CD4-positive, alpha-beta memory T cell (primary cell): ENCODE measurements at regions of chr15 and their contacts with region 1.

Region 1: GRCh38 chr15:48810414-48811317 is at the start of gene CEP152:
- DNase-seq: peak; percentile 97 to 99 (median 98)
- H3K4me3 ChIP-seq: peak within 1 kb of the TSS; percentile 91 to 99
- H3K4me3 Mint-ChIP-seq: peak within 1 kb of the TSS; percentile 80 to 95 (median 94)
- H3K27ac ChIP-seq: peak within 1 kb of the TSS; percentile 67
- H3K27ac Mint-ChIP-seq: peak within 1 kb of the TSS; percentile 82 to 95 (median 88)
- H3K4me1 ChIP-seq: peaks cover 16% of the 10 kb centered on the region
- H3K4me1 Mint-ChIP-seq: peaks cover 19 to 38% (median 24%) of the 10 kb centered on the region in 4 donors
- H3K27me3 ChIP-seq: no peaks in the 10 kb centered on the region
- H3K27me3 Mint-ChIP-seq: peaks cover 0 to 5% of the 10 kb centered on the region in 2 donors
- total RNA-seq, gene CEP152: 14.4 to 15.3 TPM

Region 2: DNA sequence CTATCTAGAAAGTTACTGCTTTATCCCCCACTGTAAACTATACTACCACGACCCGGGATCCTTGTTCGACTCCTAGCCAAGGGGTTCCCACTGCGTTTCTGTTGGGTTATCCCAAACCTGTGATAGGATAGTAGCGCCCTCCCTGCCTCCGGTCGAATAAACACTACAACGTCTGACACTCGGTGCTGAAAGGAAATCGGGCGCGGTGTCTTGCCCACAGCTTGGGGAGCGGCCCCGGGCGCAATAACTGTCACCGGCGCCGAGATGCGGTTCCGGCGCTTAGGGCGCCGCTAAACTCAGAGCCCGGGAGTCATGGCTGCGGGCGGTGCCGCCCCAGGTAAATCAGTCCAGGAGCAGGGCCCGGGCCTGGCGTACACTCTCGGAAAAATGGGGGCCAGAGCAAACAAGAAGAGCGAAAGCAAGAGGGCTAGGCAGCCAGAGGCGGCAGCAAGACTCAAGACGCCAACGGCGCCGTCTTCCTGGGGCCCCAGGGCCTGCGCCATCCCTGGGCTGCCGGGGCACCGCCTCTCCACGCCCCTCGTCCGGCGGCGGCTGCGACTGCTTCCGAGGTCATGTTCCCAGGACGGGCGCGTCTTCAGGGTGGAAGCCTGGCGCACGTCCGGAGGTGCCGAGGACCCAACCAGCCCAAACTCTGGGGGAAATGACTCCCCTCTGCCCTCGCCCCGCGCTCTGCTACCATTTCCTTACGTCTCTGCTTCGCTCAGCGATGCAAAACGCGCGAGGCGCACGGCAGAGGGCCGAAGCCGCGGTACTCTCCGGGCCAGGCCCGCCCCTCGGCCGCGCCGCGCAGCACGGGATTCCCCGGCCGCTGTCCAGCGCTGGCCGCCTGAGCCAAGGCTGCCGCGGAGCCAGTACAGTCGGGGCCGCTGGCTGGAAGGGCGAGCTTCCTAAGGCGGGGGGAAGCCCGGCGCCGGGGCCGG is 479.5 kb before region 1 on chr15 and contains the start of gene DUT:
- CTCF ChIA-PET with region 1: no interaction called
- POLR2A ChIA-PET with region 1: no interaction called
- intact Hi-C with region 1: loop called (anchors 1 kb)
- DNase-seq: peak; percentile 83 to 87 (median 85)
- H3K4me3 ChIP-seq: peak within 1 kb of the TSS; percentile 55 to 84
- H3K4me3 Mint-ChIP-seq: peak within 1 kb of the TSS; percentile 96 to 100 (median 100)
- H3K27ac ChIP-seq: peak within 1 kb of the TSS; percentile 89
- H3K27ac Mint-ChIP-seq: peak within 1 kb of the TSS; percentile 98 to 100 (median 99)
- H3K4me1 ChIP-seq: peaks cover 21% of the 10 kb centered on the region
- H3K4me1 Mint-ChIP-seq: peaks cover 16 to 35% (median 27%) of the 10 kb centered on the region in 4 donors
- H3K27me3 ChIP-seq: no peaks in the 10 kb centered on the region
- H3K27me3 Mint-ChIP-seq: no peaks in the 10 kb centered on the region
- total RNA-seq, gene DUT: 127 to 131 TPM

Region 3: GRCh38 chr15:48695088-48695826 is 115.4 kb before region 1 on chr15:
- CTCF ChIA-PET with region 1: no interaction called
- POLR2A ChIA-PET with region 1: no interaction called
- intact Hi-C with region 1: no loop called
- DNase-seq: no peak
- H3K4me3 ChIP-seq: no peak overlapping the region
- H3K4me3 Mint-ChIP-seq: no peak overlapping the region
- H3K27ac ChIP-seq: no peak overlapping the region
- H3K27ac Mint-ChIP-seq: no peak overlapping the region
- H3K4me1 ChIP-seq: no peaks in the 10 kb centered on the region
- H3K4me1 Mint-ChIP-seq: no peaks in the 10 kb centered on the region
- H3K27me3 ChIP-seq: no peaks in the 10 kb centered on the region
- H3K27me3 Mint-ChIP-seq: no peaks in the 10 kb centered on the region

Region 4: GRCh38 chr15:48877630-48878595 is 67.2 kb after region 1 on chr15 and contains the start of gene EID1:
- CTCF ChIA-PET with region 1: interaction called, 3 read pairs
- POLR2A ChIA-PET with region 1: interaction called, 28 read pairs
- intact Hi-C with region 1: loop called (anchors 1 kb)
- DNase-seq: peak; percentile 93 to 95 (median 94)
- H3K4me3 ChIP-seq: peak within 1 kb of the TSS; percentile 74 to 96
- H3K4me3 Mint-ChIP-seq: peak within 1 kb of the TSS; percentile 96 to 100 (median 98)
- H3K27ac ChIP-seq: peak within 1 kb of the TSS; percentile 71
- H3K27ac Mint-ChIP-seq: peak within 1 kb of the TSS; percentile 97 to 100 (median 99)
- H3K4me1 ChIP-seq: peaks cover 26% of the 10 kb centered on the region
- H3K4me1 Mint-ChIP-seq: peaks cover 18 to 31% (median 24%) of the 10 kb centered on the region in 4 donors
- H3K27me3 ChIP-seq: no peaks in the 10 kb centered on the region
- H3K27me3 Mint-ChIP-seq: peaks cover 3 to 4% of the 10 kb centered on the region in 2 donors
- total RNA-seq, gene EID1: 76.0 to 91.2 TPM

Region 5: GRCh38 chr15:49169880-49170597 is 359.4 kb after region 1 on chr15 and contains the start of gene GALK2:
- CTCF ChIA-PET with region 1: no interaction called
- POLR2A ChIA-PET with region 1: interaction called, 4 read pairs
- intact Hi-C with region 1: loop called (anchors 2 kb)
- DNase-seq: peak; percentile 83 to 97 (median 85)
- H3K4me3 ChIP-seq: peak within 1 kb of the TSS; percentile 57 to 86
- H3K4me3 Mint-ChIP-seq: peak within 1 kb of the TSS; percentile 94 to 99 (median 98)
- H3K27ac ChIP-seq: peak within 1 kb of the TSS; percentile 80
- H3K27ac Mint-ChIP-seq: peak within 1 kb of the TSS; percentile 90 to 100 (median 98)
- H3K4me1 ChIP-seq: peaks cover 34% of the 10 kb centered on the region
- H3K4me1 Mint-ChIP-seq: peaks cover 26 to 50% (median 38%) of the 10 kb centered on the region in 4 donors
- H3K27me3 ChIP-seq: no peaks in the 10 kb centered on the region
- H3K27me3 Mint-ChIP-seq: no peaks in the 10 kb centered on the region
- total RNA-seq, gene GALK2: 30.7 to 31.5 TPM

Region 6: DNA sequence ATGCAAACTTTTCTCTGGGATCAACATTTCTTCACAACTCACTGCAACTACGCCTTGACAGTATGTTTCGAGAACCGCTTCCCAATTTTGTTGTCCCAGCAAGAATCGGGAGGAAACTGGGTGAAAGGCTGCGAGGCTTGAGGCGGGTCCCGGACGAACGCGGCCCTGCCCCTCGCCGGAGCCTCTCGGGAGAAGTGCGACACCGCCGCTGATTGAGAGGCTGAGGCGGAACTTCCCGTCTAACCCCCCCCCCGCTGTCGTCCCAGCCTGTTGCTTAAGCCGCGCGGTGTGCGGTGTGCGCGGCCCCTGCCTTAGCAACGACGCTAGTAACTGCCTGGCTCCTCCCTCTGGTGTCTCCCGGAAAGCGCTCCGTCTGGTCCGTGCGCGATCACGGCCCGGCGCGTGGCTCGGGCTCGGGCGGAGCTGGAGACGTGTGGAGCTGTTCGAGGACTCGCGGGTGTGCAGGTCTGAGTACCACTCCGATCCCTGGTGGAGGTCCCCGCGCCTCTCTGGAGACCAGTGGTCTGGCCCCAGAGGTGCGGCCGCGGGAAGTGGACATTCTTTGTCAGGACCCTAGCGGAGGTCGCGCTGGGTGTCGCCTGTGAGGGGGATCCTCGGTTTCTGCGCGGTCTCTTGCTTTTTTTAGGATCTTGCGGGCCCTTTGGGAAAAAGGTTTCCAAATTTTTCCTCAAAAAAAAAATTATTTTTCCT is 810.1 kb after region 1 on chr15 and contains the starts of genes DTWD1 and FAM227B:
- CTCF ChIA-PET with region 1: no interaction called
- POLR2A ChIA-PET with region 1: interaction called, 6 read pairs
- intact Hi-C with region 1: loop called (anchors 2 kb)
- DNase-seq: peak; percentile 92 to 96 (median 93)
- H3K4me3 ChIP-seq: peak within 1 kb of the TSS; percentile 80 to 92
- H3K4me3 Mint-ChIP-seq: peak within 1 kb of the TSS; percentile 95 to 99 (median 98)
- H3K27ac ChIP-seq: peak within 1 kb of the TSS; percentile 71
- H3K27ac Mint-ChIP-seq: peak within 1 kb of the TSS; percentile 98 to 99 (median 99)
- H3K4me1 ChIP-seq: peaks cover 22% of the 10 kb centered on the region
- H3K4me1 Mint-ChIP-seq: peaks cover 25 to 51% (median 37%) of the 10 kb centered on the region in 4 donors
- H3K27me3 ChIP-seq: no peaks in the 10 kb centered on the region
- H3K27me3 Mint-ChIP-seq: no peaks in the 10 kb centered on the region
- total RNA-seq, gene DTWD1: 28.7 to 29.9 TPM
- total RNA-seq, gene FAM227B: 11.5 to 13.6 TPM

Region 7: DNA sequence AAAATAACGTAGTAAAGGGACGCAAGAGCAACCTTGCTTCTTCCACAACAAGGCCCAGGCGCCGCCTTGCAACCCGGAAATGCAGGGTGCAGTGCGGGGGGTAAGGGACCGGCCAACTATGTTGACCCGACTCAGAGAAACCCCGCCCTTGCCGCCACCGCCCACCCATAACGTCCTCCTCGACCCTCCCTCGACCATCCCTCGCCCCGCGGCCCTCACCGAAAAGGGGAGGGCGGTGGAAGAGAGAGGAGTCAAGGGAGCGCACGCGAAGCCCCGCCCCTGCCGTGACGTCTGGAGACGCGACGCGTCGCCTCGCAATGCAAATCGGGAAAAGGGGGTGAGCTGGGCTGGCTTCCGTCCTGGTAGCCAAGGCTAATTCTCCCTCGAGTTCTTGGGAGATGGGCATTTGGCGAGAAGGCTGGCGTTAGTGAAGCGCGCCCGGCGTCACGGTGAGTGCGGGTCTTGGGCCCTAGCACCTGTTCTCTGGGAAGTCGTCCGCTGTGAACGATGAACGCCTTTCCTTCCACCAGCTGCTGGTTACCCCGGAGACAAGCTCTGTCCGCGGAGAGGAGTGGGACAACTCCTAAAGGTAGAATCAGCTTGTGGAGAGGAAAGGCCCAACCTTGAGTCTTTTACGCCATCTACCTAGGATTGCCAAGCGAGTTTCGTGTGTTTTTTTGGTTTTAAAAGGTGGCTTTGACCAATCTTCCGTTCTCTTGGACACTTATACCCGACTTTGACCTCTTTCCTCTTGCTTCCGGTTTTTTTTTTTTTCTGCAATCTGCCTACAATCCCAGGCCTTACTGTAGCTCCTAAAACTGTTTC is 1613.6 kb after region 1 on chr15 and contains the start of gene USP8:
- CTCF ChIA-PET with region 1: no interaction called
- POLR2A ChIA-PET with region 1: interaction called, 3 read pairs
- intact Hi-C with region 1: loop called (anchors 5 kb)
- DNase-seq: peak; percentile 90 to 93 (median 92)
- H3K4me3 ChIP-seq: peak within 1 kb of the TSS; percentile 99
- H3K4me3 Mint-ChIP-seq: peak within 1 kb of the TSS; percentile 96 to 100 (median 98)
- H3K27ac ChIP-seq: peak within 1 kb of the TSS; percentile 94
- H3K27ac Mint-ChIP-seq: peak within 1 kb of the TSS; percentile 98 to 100 (median 99)
- H3K4me1 ChIP-seq: peaks cover 32% of the 10 kb centered on the region
- H3K4me1 Mint-ChIP-seq: peaks cover 13 to 53% (median 32%) of the 10 kb centered on the region in 4 donors
- H3K27me3 ChIP-seq: no peaks in the 10 kb centered on the region
- H3K27me3 Mint-ChIP-seq: no peaks in the 10 kb centered on the region
- total RNA-seq, gene USP8: 68.9 to 70.9 TPM